WTC11 (cell line): ENCODE measurements at regions of chr2 and their contacts with region 1.

Region 1: GRCh38 chr2:237774802-237775553 is 23.6 kb upstream of the RBM44 start:
- DNase-seq: peak; percentile 71
- ATAC-seq: peak; percentile 96
- H3K4me3 Mint-ChIP-seq: no peak overlapping the region
- H3K27ac Mint-ChIP-seq: peak overlapping the region; percentile 83
- H3K4me1 Mint-ChIP-seq: peaks cover 6% of the 10 kb centered on the region; the same call in 1 of the 2 replicates
- H3K27me3 Mint-ChIP-seq: no peaks in the 10 kb centered on the region
- CTCF ChIP-seq: peak; percentile 72

Region 2: GRCh38 chr2:237723602-237724001 is 51.4 kb before region 1 on chr2:
- CTCF ChIA-PET with region 1: no interaction called
- POLR2A ChIA-PET with region 1: no interaction called
- DNase-seq: peak; percentile 66
- ATAC-seq: peak; percentile 94
- H3K4me3 Mint-ChIP-seq: no peak overlapping the region
- H3K27ac Mint-ChIP-seq: no peak overlapping the region
- H3K4me1 Mint-ChIP-seq: peaks cover 57% of the 10 kb centered on the region
- H3K27me3 Mint-ChIP-seq: no peaks in the 10 kb centered on the region
- CTCF ChIP-seq: no peak

Region 3: GRCh38 chr2:237758185-237758584 is 16.8 kb before region 1 on chr2:
- CTCF ChIA-PET with region 1: interaction called, 10 read pairs
- POLR2A ChIA-PET with region 1: no interaction called
- DNase-seq: no peak
- ATAC-seq: no peak
- H3K4me3 Mint-ChIP-seq: no peak overlapping the region
- H3K27ac Mint-ChIP-seq: no peak overlapping the region
- H3K4me1 Mint-ChIP-seq: no peaks in the 10 kb centered on the region
- H3K27me3 Mint-ChIP-seq: no peaks in the 10 kb centered on the region
- CTCF ChIP-seq: no peak

Region 4: DNA sequence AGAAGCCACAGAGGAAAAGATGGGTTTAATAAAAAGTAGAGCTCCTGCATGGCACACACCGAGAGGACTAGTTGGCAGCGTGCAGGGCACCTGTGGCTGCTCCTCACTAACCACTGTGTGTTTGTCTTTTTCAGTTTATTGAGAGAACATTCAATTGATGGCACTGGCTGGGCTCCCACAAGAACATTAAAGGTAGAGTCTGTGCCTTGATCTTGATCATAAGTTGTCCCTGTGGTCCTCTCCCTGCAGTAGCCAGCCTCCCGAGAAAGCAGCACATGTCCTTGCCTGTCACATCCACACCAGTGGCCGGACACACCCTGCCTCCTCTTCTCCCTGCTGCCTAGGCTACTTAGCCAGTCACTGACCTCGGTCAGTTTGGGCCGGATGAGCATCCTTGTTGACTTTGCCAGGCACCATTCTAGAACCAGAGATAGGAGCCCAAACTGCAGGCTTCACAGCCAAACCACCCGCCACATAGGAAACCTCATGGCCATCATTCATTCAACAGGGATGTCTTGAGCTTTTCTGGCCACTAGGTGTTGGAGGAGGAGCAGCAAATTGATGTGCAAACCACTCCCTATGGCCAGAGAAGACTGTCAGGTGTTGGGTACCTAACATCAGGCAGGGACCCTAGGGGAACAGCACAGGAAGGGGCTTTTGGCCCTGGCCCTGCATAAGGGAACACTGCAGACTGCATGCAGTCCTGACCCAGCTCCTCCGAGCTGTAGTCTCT is 255.6 kb after region 1 on chr2:
- CTCF ChIA-PET with region 1: no interaction called
- POLR2A ChIA-PET with region 1: no interaction called
- DNase-seq: no peak
- ATAC-seq: no peak
- H3K4me3 Mint-ChIP-seq: no peak overlapping the region
- H3K27ac Mint-ChIP-seq: no peak overlapping the region
- H3K4me1 Mint-ChIP-seq: peaks cover 20% of the 10 kb centered on the region
- H3K27me3 Mint-ChIP-seq: no peaks in the 10 kb centered on the region
- CTCF ChIP-seq: no peak

Region 5: DNA sequence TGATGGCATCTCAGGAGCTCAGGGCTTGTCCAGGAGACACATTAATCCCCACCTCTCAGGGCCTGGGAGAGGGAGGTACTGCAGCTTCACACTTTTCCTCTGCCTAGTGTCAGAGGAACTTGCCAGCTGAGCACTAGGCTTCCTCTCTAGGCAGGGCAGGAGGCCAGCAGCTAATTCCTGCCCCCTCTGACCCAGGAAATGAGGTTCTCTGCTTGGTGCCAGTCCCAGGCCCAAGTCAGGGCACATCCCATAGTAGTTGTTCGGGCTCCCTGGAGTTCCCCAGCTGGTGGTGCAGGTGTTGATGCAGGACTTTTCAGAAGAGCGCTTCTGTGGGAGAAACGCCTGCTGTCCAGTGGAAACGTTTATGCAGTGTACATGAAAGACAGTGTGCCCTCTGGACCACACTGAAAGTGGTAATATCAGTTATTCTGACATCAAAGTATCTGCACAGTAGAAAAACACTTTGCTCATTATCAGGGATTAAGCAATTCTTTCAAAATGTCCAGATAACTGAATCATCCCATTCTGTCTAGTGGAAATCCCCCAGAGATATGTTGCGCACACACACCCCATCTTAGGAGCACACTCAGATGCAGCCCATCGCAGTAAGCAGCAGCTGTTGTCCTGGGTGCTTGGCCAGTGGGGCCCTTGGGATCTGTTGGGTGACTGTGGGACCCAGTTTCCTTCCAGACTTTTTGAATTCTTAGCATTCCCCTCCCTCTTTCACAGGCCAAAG is 268.0 kb after region 1 on chr2:
- CTCF ChIA-PET with region 1: no interaction called
- POLR2A ChIA-PET with region 1: no interaction called
- DNase-seq: no peak
- ATAC-seq: no peak
- H3K4me3 Mint-ChIP-seq: no peak overlapping the region
- H3K27ac Mint-ChIP-seq: no peak overlapping the region
- H3K4me1 Mint-ChIP-seq: no peaks in the 10 kb centered on the region
- H3K27me3 Mint-ChIP-seq: no peaks in the 10 kb centered on the region
- CTCF ChIP-seq: no peak